Panc1 (cell line): ENCODE measurements at regions of chr5 and their contacts with region 1.

Region 1: DNA sequence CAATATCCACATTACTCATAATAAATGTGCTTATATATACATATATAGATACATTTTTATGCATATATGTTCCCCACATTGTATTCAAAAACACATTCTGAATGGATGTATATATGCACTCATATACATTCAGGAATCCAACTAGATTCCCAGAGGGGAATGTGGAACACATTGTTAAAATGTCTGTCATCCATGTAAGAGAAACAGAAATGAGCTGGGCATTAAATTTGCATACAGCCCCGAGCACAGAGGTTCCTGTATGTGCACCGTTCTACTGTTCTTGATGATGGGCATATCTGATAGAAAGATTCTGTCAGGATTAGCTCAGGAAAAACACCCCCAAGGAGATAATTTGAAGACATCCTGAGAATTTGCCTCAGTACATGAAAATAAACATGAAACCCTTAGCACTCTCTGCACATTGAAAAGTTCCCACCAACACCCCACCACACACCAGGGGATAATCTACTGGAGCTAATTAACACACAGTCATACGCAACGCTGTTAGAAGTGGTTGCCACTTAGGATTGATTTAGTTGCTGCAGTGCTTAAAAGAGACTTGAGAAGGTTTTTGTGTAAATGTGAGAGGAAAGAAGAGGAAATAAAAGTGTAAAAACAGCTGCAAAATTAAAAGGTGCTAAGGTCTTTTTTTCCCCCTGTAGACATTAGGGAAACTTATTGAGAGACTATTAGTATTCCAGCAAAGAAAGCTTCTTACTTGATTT is 223.3 kb downstream of the SLF1 start:
- DNase-seq: no peak
- ATAC-seq: no peak
- H3K4me3 ChIP-seq: no peak overlapping the region
- H3K27ac ChIP-seq: no peak overlapping the region
- H3K4me1 ChIP-seq: no peaks in the 10 kb centered on the region
- H3K27me3 ChIP-seq: no peaks in the 10 kb centered on the region
- CTCF ChIP-seq: no peak

Region 2: DNA sequence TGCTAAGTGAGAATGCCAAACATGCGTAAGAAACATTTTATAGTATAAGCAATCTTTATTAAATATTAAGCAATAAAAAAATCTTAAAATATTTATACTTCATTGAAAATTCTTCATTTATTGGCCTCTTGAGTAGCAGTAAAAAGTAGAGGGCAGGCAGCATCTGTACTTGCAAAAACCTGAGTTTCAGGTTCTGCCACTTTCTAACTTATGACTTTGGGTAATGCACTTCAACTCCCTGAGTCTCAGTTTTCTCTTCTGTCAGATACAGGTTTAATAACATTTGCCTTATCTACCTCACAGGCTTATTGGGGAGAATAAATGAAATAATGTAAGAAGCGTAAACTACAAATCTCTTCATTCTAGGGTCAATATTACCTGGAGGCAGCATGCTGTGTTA is 463.0 kb after region 1 on chr5:
- CTCF ChIA-PET with region 1: interaction called, 14 read pairs
- POLR2A ChIA-PET with region 1: no interaction called
- in situ Hi-C with region 1: no loop called
- intact Hi-C with region 1: no loop called
- DNase-seq: no peak
- ATAC-seq: no peak
- H3K4me3 ChIP-seq: no peak overlapping the region
- H3K27ac ChIP-seq: no peak overlapping the region
- H3K4me1 ChIP-seq: no peaks in the 10 kb centered on the region
- H3K27me3 ChIP-seq: peaks cover 12% of the 10 kb centered on the region
- CTCF ChIP-seq: no peak